Dendritic cell treated with granulocyte-macrophage colony-stimulating factor and Interleukin-4, amounts not matched to agents 40 ng/mL and 50 ng/mL, for 4 days (primary cell): ENCODE measurements at regions of chr11 and their contacts with region 1.

Region 1: GRCh38 chr11:1917671-1918516 is 1.6 kb upstream of the TNNT3 start:
- H3K4me3 Mint-ChIP-seq: no peak overlapping the region
- H3K27ac Mint-ChIP-seq: no peak overlapping the region
- H3K4me1 Mint-ChIP-seq: peaks cover 18% of the 10 kb centered on the region
- H3K27me3 Mint-ChIP-seq: peaks cover 33% of the 10 kb centered on the region

Region 2: DNA sequence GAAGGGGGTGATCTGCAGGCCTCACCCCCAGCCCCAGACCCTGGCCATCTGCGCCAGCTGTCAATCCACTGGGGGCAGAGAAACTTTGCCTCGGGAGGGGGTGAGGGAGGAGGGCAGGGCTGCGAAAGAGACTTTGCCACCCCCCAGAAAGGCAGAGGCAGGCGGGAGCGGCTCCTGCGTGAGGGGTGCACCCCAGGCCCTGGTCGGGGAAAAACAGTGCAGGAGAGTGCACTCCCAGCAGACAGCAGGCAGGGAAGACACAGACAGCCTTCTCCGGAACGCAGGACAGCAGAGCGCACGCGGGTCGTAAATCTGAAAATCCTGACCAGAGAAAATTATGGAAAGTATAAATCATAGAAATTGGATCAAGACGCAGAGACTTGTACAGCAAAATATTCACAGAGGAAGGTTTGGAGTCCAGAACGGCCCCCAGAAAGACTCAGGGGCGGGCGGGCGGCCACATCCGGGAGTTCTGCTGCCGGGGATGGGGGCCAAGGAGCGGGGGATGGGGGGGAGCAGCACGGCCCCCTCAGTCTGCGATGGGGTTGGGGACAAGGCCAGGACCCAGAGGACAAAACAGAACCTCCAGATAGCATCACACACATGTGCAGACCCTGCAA is 21.2 kb after region 1 on chr11:
- intact Hi-C with region 1: loop called (anchors 1 kb)
- H3K4me3 Mint-ChIP-seq: no peak overlapping the region
- H3K27ac Mint-ChIP-seq: no peak overlapping the region
- H3K4me1 Mint-ChIP-seq: peaks cover 12% of the 10 kb centered on the region
- H3K27me3 Mint-ChIP-seq: peaks cover 31% of the 10 kb centered on the region